CD8-positive, alpha-beta memory T cell (primary cell): ENCODE measurements at regions of chr3 and their contacts with region 1.

Region 1: GRCh38 chr3:155805802-155806618 is at the start of gene C3orf33:
- DNase-seq: peak; percentile 70 to 81 (median 77)
- H3K4me3 ChIP-seq: peak within 1 kb of the TSS; percentile 49
- H3K4me3 Mint-ChIP-seq: peak within 1 kb of the TSS; percentile 86 to 93 (median 90)
- H3K27ac ChIP-seq: peak within 1 kb of the TSS; percentile 59
- H3K27ac Mint-ChIP-seq: peak within 1 kb of the TSS; percentile 67 to 98 (median 92)
- H3K4me1 ChIP-seq: no peaks in the 10 kb centered on the region
- H3K4me1 Mint-ChIP-seq: peaks cover 20 to 39% (median 30%) of the 10 kb centered on the region in 3 donors
- H3K27me3 ChIP-seq: peaks cover 3% of the 10 kb centered on the region
- H3K27me3 Mint-ChIP-seq: peaks cover 4 to 7% of the 10 kb centered on the region in 2 donors
- total RNA-seq, gene C3orf33: 1.8 to 2.2 TPM

Region 2: GRCh38 chr3:155782390-155782997 is 23.5 kb before region 1 on chr3:
- CTCF ChIA-PET with region 1: interaction called, 13 read pairs
- POLR2A ChIA-PET with region 1: no interaction called
- DNase-seq: no peak
- H3K4me3 ChIP-seq: no peak overlapping the region
- H3K4me3 Mint-ChIP-seq: no peak overlapping the region
- H3K27ac ChIP-seq: no peak overlapping the region
- H3K27ac Mint-ChIP-seq: peak overlapping the region in 1 of 8 donors; percentile 24
- H3K4me1 ChIP-seq: no peaks in the 10 kb centered on the region
- H3K4me1 Mint-ChIP-seq: peaks cover 5 to 14% (median 13%) of the 10 kb centered on the region in 3 donors
- H3K27me3 ChIP-seq: no peaks in the 10 kb centered on the region
- H3K27me3 Mint-ChIP-seq: peaks cover 0 to 2% of the 10 kb centered on the region in 2 donors

Region 3: GRCh38 chr3:155835341-155836071 is 29.5 kb after region 1 on chr3:
- CTCF ChIA-PET with region 1: interaction called, 10 read pairs
- POLR2A ChIA-PET with region 1: no interaction called
- DNase-seq: peak in 1 of 5 donors; percentile 34
- H3K4me3 ChIP-seq: no peak overlapping the region
- H3K4me3 Mint-ChIP-seq: peak overlapping the region in 1 of 7 donors; percentile 10
- H3K27ac ChIP-seq: no peak overlapping the region
- H3K27ac Mint-ChIP-seq: peak overlapping the region in 2 of 8 donors; percentile 44 to 57
- H3K4me1 ChIP-seq: peaks cover 4% of the 10 kb centered on the region
- H3K4me1 Mint-ChIP-seq: peaks cover 17 to 22% (median 20%) of the 10 kb centered on the region in 3 donors
- H3K27me3 ChIP-seq: no peaks in the 10 kb centered on the region
- H3K27me3 Mint-ChIP-seq: no peaks in the 10 kb centered on the region

Region 4: DNA sequence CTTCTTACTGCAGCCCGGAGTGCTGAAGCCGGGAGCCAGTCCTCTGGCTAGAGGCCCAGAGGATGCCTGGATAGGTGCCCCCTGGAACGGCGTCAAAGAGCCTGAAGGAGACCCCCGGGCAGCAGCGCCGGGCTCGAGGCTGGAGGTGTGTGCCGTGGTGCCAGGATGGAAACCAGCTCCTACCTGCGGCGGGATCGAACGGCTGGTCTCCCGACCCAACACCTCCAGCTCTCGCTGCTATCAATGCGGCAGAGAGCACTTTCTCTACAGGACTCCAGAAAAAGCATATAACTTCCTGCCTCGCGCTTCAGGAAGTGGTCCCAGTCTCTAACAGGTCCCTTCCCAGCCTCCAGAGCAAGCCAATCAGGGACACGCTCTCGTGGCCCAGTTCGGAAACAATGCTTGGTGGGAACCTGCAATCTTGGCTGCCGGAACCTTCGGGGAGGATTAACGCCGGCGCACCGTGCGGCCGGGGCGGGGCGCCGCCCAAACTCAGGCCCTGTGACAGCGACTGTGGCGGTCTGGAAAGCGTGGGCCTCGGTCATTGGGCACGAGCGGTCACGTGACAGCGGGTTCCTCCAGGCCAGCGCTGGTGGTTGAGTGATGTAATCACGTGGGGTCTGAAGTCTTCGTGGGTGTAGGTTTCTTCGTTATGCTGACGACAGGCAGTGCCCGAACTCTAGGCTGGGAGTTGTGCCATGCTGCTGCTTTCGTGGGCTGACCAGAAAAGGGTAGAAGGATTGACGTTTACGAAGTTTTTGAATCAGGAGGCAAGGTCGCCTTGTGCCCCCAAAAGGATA is 48.3 kb after region 1 on chr3 and contains the start of gene SLC33A1:
- CTCF ChIA-PET with region 1: interaction called, 44 read pairs
- POLR2A ChIA-PET with region 1: interaction called, 8 read pairs
- DNase-seq: peak; percentile 97 to 99 (median 99)
- H3K4me3 ChIP-seq: peak within 1 kb of the TSS; percentile 93
- H3K4me3 Mint-ChIP-seq: peak within 1 kb of the TSS; percentile 86 to 98 (median 97)
- H3K27ac ChIP-seq: peak within 1 kb of the TSS; percentile 96
- H3K27ac Mint-ChIP-seq: peak within 1 kb of the TSS; percentile 96 to 100 (median 100)
- H3K4me1 ChIP-seq: peaks cover 31% of the 10 kb centered on the region
- H3K4me1 Mint-ChIP-seq: peaks cover 33 to 42% (median 41%) of the 10 kb centered on the region in 3 donors
- H3K27me3 ChIP-seq: no peaks in the 10 kb centered on the region
- H3K27me3 Mint-ChIP-seq: no peaks in the 10 kb centered on the region
- total RNA-seq, gene SLC33A1: 22.8 to 24.8 TPM

Region 5: GRCh38 chr3:155870133-155870944 is 64.3 kb after region 1 on chr3 and contains the start of gene GMPS:
- CTCF ChIA-PET with region 1: interaction called, 40 read pairs
- POLR2A ChIA-PET with region 1: interaction called, 24 read pairs
- DNase-seq: peak; percentile 93 to 98 (median 96)
- H3K4me3 ChIP-seq: peak within 1 kb of the TSS; percentile 95
- H3K4me3 Mint-ChIP-seq: peak within 1 kb of the TSS; percentile 91 to 96 (median 94)
- H3K27ac ChIP-seq: peak within 1 kb of the TSS; percentile 88
- H3K27ac Mint-ChIP-seq: peak within 1 kb of the TSS; percentile 84 to 99 (median 96)
- H3K4me1 ChIP-seq: peaks cover 26% of the 10 kb centered on the region
- H3K4me1 Mint-ChIP-seq: peaks cover 28 to 33% (median 28%) of the 10 kb centered on the region in 3 donors
- H3K27me3 ChIP-seq: no peaks in the 10 kb centered on the region
- H3K27me3 Mint-ChIP-seq: no peaks in the 10 kb centered on the region
- total RNA-seq, gene GMPS: 113 to 117 TPM